Activated naive CD4-positive, alpha-beta T cell treated with anti-CD3 and anti-CD28 coated beads for 36 hours (primary cell): ENCODE measurements at regions of chr2 and their contacts with region 1.

Region 1: GRCh38 chr2:202265467-202266277 is at the start of gene NOP58:
- DNase-seq: peak; percentile 96
- H3K4me3 Mint-ChIP-seq: no peak within 1 kb of the TSS
- H3K27ac Mint-ChIP-seq: no peak within 1 kb of the TSS
- H3K4me1 Mint-ChIP-seq: peaks cover 22% of the 10 kb centered on the region
- H3K27me3 Mint-ChIP-seq: no peaks in the 10 kb centered on the region
- total RNA-seq, gene NOP58: 118 to 123 TPM

Region 2: GRCh38 chr2:201182650-201183364 is 1082.9 kb before region 1 on chr2 and contains the start of gene CASP10:
- CTCF ChIA-PET with region 1: no interaction called
- intact Hi-C with region 1: loop called (anchors 2 kb)
- DNase-seq: peak; percentile 32
- H3K4me3 Mint-ChIP-seq: peak within 1 kb of the TSS; percentile 97
- H3K27ac Mint-ChIP-seq: peak within 1 kb of the TSS; percentile 96
- H3K4me1 Mint-ChIP-seq: peaks cover 39% of the 10 kb centered on the region
- H3K27me3 Mint-ChIP-seq: no peaks in the 10 kb centered on the region
- total RNA-seq, gene CASP10: 22.0 to 22.1 TPM

Region 3: DNA sequence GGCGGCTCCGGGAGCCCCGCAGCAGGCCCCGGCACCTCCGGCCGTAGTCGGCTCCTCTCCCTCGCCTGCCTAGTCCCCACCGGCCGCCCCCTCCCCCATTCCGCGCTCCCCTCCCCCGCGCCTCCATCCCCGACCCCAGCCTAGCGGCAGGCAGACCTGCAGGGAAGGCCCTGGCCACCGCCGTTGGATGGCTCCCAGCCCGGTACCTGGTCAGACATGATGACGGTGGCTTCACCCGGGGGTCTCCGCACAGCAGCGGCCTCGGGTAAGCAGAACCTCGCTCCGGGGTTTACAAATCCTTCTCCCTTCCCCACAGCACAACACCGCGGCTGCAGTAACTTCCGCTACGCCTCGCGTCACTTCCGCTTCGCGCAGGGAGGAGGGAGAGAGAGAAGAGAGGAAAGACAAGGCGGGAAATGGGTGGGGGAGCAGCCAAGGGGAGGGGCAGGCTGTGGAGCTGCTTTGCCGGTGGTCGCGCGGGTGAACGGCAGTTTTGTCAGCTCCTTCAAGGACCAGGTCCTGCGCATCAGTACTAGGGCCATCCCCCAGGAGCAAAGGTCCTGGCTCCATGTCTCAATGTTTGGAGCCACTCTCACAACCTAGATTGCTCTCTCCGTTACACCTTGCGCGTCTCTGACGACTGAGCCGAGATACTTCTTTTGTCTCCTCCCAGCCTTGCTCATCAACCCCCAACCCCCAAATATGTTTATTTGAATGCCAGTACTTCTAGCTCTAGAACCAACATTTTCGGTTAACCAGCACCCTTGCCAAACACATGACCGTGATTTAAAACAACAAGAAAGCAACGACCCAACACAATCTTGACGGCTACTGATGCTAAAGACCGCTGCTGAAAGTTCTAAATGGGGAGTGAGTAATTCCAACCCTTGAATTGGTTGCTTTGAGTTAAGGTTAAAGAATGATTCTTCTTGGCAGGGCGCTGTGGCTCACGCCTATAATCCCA is 27.2 kb before region 1 on chr2 and contains the start of gene SUMO1:
- CTCF ChIA-PET with region 1: interaction called, 3 read pairs
- intact Hi-C with region 1: loop called (anchors 1 kb)
- DNase-seq: peak; percentile 97
- H3K4me3 Mint-ChIP-seq: peak within 1 kb of the TSS; percentile 97
- H3K27ac Mint-ChIP-seq: peak within 1 kb of the TSS; percentile 91
- H3K4me1 Mint-ChIP-seq: peaks cover 31% of the 10 kb centered on the region
- H3K27me3 Mint-ChIP-seq: no peaks in the 10 kb centered on the region
- total RNA-seq, gene SUMO1: 131 to 132 TPM

Region 4: DNA sequence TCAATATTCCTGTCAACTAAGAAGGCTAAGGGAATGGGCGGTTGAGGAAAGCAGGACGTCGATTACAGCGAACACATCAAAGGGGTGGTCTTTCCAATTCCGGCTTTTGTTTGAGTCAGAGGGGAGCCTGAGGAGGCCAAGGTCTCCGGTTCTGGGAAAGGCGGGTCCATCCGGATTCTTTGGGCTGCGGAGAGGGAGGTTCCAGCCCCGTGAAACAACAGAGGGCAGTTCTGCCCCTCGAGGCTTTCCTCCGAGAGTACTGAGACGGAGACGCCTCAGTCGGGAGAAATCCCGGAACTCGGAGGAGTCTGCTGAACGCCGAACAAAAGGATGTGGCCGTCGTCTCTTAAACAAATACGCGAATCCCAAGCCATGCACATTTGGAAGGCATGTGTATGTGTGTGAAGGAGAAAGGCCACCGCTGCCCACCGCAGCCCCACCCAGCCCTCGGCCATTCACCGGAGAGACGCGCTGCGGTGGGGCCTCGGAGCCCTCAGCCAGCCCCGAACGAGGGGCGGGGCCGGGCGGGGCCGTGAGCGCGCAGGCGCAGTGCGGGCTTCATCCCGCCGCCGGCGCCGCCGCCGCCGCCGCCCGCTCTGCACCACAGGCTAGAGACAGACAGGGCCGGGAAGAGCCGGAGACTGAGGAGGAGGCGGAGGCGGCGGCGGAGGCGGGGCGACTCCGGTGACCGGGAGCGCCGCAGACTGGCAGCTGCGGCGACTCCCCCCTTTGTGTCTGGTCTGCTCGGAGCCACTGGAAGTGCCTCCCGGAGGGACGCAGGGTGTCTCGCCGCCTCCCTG is 110.1 kb after region 1 on chr2 and contains the start of gene BMPR2:
- CTCF ChIA-PET with region 1: no interaction called
- intact Hi-C with region 1: loop called (anchors 1 kb)
- DNase-seq: peak; percentile 79
- H3K4me3 Mint-ChIP-seq: peak within 1 kb of the TSS; percentile 96
- H3K27ac Mint-ChIP-seq: peak within 1 kb of the TSS; percentile 71
- H3K4me1 Mint-ChIP-seq: peaks cover 20% of the 10 kb centered on the region
- H3K27me3 Mint-ChIP-seq: no peaks in the 10 kb centered on the region
- total RNA-seq, gene BMPR2: 4.2 to 5.5 TPM

Region 5: DNA sequence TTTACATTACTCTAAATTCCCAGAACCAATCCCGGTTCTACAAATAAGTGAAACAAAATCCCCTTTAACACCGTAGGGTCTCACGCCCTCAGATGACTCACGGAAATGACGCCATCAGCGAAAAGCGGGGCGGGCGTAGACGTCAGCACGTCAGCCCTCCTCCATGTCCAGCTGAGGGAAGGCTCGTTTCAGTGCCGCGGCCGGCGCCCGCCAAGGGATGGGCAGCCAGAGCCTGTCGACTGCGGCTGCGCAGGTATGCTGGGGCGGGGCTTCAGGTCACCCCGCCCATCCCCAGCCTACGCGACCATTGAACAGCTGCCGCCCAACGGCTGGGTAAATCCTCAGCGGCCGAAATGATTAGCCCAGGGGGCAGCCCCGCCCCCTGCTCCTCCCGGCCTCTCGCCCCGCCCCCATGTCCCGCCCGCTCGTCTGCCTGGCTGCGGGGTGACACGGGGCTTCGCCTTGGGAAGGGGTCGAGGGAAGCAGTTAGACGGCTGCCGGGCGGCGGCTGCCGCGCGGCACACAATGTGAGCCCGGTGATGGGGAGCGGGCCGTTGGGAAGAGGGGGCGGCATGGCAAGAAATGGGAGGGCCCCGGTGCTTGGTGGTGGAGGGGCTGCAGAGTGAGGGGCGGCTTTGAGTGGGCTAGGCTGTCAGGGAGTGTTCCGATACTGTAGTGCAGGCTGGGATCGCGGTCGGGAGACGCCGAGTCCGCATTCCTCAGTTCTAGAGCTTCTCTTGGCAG is 749.0 kb after region 1 on chr2 and contains the start of gene NBEAL1:
- CTCF ChIA-PET with region 1: no interaction called
- intact Hi-C with region 1: loop called (anchors 1 kb)
- DNase-seq: peak; percentile 97
- H3K4me3 Mint-ChIP-seq: peak within 1 kb of the TSS; percentile 95
- H3K27ac Mint-ChIP-seq: peak within 1 kb of the TSS; percentile 74
- H3K4me1 Mint-ChIP-seq: peaks cover 27% of the 10 kb centered on the region
- H3K27me3 Mint-ChIP-seq: no peaks in the 10 kb centered on the region
- total RNA-seq, gene NBEAL1: 7.9 to 8.3 TPM

Region 6: DNA sequence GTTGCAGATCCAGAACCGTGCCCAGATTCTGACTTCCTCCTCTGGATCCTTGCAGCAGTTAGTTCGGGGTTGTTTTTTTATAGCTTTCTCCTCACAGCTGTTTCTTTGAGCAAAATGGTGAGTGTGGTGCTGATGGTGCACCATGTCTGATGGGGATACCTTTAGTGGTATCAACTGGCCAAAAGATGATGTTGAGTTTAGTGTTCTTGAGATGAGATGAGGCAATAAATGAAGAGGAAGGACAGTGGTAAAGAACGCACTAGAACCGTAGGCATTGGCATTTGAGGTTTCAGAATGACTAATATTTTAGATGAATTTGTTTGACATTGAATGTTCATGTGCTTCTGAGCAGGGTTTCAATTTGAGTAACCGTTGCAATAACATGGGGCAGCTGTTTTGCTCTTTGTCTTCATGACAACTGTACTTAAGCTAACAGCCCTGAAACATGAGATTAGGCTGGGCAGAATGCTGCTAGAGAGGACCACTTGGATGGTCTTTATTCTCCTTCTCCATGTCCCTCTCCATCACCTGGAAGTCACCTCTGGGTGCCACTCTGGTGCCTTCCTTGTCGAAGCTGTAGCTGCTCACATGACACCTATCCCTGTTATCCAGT is 1605.8 kb after region 1 on chr2:
- CTCF ChIA-PET with region 1: no interaction called
- intact Hi-C with region 1: loop called (anchors 5 kb)
- DNase-seq: peak; percentile 69
- H3K4me3 Mint-ChIP-seq: peak overlapping the region; percentile 92
- H3K27ac Mint-ChIP-seq: peak overlapping the region; percentile 99
- H3K4me1 Mint-ChIP-seq: peaks cover 55% of the 10 kb centered on the region
- H3K27me3 Mint-ChIP-seq: no peaks in the 10 kb centered on the region